PC-9 (cell line): ENCODE measurements at regions of chr14 and their contacts with region 1.

Region 1: DNA sequence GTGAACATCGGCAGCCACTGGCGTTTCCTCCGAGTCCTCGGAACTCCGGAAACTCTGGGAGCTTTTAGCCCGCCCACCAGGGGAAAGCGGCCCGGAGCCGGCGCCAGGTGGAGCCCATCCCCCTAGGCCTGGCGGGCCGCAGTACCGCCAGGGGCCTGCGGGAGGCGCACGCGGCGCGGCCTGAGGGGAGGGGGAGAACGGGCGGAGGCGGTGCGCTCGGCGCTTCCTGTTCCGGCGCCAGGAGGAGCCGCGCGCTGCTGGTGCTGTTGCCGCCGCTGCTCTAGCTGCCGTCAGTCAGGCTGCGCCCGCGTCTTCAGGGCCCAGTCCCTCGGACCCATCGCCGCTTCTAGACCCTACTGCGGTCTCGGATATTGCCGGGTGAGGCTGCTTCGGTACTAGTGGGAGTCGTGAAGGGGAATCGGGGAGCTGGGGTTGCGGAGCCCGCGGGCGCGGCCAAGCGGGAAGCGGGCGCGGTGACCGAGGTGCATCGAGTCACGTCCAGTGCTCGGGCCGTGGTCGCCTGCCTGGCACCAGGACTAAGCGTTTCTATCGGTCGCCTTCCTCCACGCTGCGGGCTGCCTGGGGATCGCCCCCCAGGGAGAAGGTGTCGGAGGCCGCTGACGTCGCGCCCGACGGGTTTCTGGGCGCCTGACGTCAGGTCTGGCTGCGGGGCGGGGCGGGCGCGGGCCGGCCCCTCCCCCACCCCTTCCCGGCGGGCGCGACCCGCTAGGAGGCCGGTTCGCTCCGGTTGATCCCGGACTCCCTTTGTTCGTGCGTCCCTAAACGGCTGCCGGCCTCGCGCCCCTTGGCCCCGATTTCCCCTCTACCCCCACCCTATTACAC is at the start of gene MAPK1IP1L:
- DNase-seq: peak; percentile 88 to 97
- H3K4me3 ChIP-seq: peak within 1 kb of the TSS; percentile 80
- H3K27ac ChIP-seq: peak within 1 kb of the TSS; percentile 88
- H3K4me1 ChIP-seq: peaks cover 17% of the 10 kb centered on the region
- H3K27me3 ChIP-seq: no peaks in the 10 kb centered on the region
- CTCF ChIP-seq: peak; percentile 94
- total RNA-seq, gene MAPK1IP1L: 54.3 and 79.7 TPM in 2 replicates

Region 2: DNA sequence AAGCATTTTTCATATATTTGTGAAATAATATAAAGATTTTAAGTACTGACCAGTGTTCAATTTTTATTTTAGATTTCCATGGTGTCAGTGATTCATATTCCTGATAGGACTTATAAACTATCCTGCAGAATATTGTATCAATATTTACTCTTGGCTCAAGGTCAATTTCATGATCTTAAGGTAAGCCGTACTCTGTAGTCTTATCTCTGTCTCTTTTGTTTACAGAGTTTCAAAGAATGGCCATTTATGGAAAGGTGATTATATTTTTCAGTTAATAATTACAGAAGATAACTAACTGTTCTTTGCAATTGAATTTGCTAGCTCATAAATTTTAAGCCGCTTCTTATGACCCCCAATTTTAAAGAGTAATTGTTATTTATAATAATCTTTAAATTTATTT is 514.0 kb before region 1 on chr14:
- CTCF ChIA-PET with region 1: no interaction called
- POLR2A ChIA-PET with region 1: no interaction called
- intact Hi-C with region 1: no loop called
- DNase-seq: no peak
- H3K4me3 ChIP-seq: no peak overlapping the region
- H3K27ac ChIP-seq: no peak overlapping the region
- H3K4me1 ChIP-seq: no peaks in the 10 kb centered on the region
- H3K27me3 ChIP-seq: no peaks in the 10 kb centered on the region
- CTCF ChIP-seq: no peak

Region 3: GRCh38 chr14:55015006-55015405 is 36.6 kb before region 1 on chr14:
- CTCF ChIA-PET with region 1: no interaction called
- POLR2A ChIA-PET with region 1: interaction called, 13 read pairs
- intact Hi-C with region 1: no loop called
- DNase-seq: no peak
- H3K4me3 ChIP-seq: no peak overlapping the region
- H3K27ac ChIP-seq: no peak overlapping the region
- H3K4me1 ChIP-seq: no peaks in the 10 kb centered on the region
- H3K27me3 ChIP-seq: no peaks in the 10 kb centered on the region
- CTCF ChIP-seq: no peak

Region 4: GRCh38 chr14:55102141-55102621 is 50.5 kb after region 1 on chr14:
- CTCF ChIA-PET with region 1: interaction called, 3 read pairs
- POLR2A ChIA-PET with region 1: interaction called, 3 read pairs
- intact Hi-C with region 1: loop called (anchors 1 kb)
- DNase-seq: peak; percentile 89 to 97
- H3K4me3 ChIP-seq: peak overlapping the region; percentile 52; the same call in 1 of the 2 replicates
- H3K27ac ChIP-seq: peak overlapping the region; percentile 99
- H3K4me1 ChIP-seq: peaks cover 73% of the 10 kb centered on the region
- H3K27me3 ChIP-seq: no peaks in the 10 kb centered on the region
- CTCF ChIP-seq: no peak